ENCODE measurements at regions of chr2 and their contacts with region 1.

Region 1: GRCh38 chr2:168246483-168247340 is 683 bp downstream of the STK39 start:
- DNase-seq: peak; percentile 76
- H3K4me3 Mint-ChIP-seq: peak overlapping the region; percentile 95
- H3K27ac Mint-ChIP-seq: peak overlapping the region; percentile 95
- H3K4me1 Mint-ChIP-seq: peaks cover 38% of the 10 kb centered on the region
- H3K27me3 Mint-ChIP-seq: peaks cover 2% of the 10 kb centered on the region

Region 2: DNA sequence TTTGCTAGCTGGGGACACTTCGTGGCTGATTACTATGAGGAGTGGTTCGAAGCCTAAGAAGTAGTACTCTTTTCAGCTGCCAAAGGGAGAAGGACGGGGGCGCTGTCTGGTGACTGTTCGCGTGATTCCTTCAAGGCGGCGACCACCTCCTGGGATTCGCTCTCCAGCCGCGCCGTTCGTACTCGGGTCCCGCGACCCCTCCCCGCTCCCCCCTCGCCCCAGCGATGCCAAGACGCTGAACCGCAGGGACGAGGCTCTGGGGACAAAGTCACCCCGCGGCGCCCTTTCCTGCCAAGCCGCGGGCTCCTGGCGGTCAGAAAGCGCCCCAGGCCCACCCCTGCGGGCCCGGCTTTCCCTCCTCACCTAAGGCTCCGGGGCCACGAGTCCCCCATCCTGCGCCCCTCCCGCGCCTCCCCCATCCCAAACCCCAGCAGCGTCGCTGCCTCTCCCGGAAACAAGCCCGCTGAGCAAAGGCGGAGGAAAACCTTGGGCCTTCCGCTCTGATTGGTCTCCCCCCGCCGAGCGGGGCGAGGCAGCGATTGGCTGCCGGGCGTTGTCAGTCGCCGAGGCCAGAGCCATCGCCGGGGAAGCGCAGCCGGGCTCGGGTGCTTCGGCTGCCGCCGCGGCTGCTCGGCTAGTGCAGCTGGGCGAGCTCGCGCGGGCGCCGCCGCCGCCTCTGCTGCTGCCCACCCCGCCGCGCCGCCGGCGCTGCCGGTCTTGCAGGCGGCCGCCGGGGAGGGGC is 954.1 kb before region 1 on chr2:
- intact Hi-C with region 1: loop called (anchors 5 kb)
- DNase-seq: peak; percentile 65
- H3K4me3 Mint-ChIP-seq: peak within 1 kb of the TSS; percentile 70
- H3K27ac Mint-ChIP-seq: peak within 1 kb of the TSS; percentile 0
- H3K4me1 Mint-ChIP-seq: peaks cover 9% of the 10 kb centered on the region
- H3K27me3 Mint-ChIP-seq: peaks cover 35% of the 10 kb centered on the region

Region 3: GRCh38 chr2:168194784-168195522 is 51.8 kb before region 1 on chr2:
- intact Hi-C with region 1: loop called (anchors 1 kb)
- DNase-seq: peak; percentile 27
- H3K4me3 Mint-ChIP-seq: peak overlapping the region; percentile 64
- H3K27ac Mint-ChIP-seq: peak overlapping the region; percentile 91
- H3K4me1 Mint-ChIP-seq: peaks cover 56% of the 10 kb centered on the region
- H3K27me3 Mint-ChIP-seq: no peaks in the 10 kb centered on the region

Region 4: DNA sequence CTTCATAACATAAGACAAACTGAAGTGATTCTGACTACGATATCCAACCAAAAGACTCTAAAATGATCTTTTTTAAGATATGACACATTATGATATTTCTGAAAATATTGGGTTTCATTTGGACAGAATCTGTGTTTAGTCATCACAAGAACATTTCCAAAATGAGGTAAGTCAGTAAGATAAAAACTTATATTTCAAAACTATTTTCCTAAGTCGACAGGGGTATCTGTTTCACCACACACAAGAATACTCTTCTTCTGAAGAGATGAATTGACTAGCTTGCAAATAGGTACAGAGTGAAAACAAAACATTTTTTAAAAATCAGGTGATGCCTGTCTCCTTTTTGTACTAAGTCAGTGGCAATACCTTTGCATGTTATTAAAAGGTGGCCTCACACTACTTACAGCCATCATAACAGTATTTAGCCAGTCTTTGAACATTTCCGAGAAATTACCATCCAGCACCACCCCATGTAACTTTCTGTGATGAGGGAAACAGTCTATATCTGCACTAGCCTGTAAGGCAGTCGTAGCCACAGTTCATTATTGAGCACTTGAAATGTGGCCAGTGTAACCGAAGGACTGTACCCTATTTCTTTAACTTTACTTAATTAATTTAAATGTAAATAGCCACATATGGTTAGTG is 12.8 kb before region 1 on chr2:
- intact Hi-C with region 1: loop called (anchors 1 kb)
- DNase-seq: no peak
- H3K4me3 Mint-ChIP-seq: no peak overlapping the region
- H3K27ac Mint-ChIP-seq: peak overlapping the region; percentile 32
- H3K4me1 Mint-ChIP-seq: peaks cover 33% of the 10 kb centered on the region
- H3K27me3 Mint-ChIP-seq: no peaks in the 10 kb centered on the region

Region 5: GRCh38 chr2:168490015-168490874 is 243.5 kb after region 1 on chr2:
- intact Hi-C with region 1: loop called (anchors 1 kb)
- DNase-seq: peak; percentile 45
- H3K4me3 Mint-ChIP-seq: peak overlapping the region; percentile 78
- H3K27ac Mint-ChIP-seq: peak overlapping the region; percentile 92
- H3K4me1 Mint-ChIP-seq: peaks cover 42% of the 10 kb centered on the region
- H3K27me3 Mint-ChIP-seq: peaks cover 9% of the 10 kb centered on the region

Region 6: GRCh38 chr2:168890006-168890782 is 643.5 kb after region 1 on chr2 and contains the start of gene SPC25:
- intact Hi-C with region 1: loop called (anchors 1 kb)
- DNase-seq: peak; percentile 87
- H3K4me3 Mint-ChIP-seq: peak within 1 kb of the TSS; percentile 98
- H3K27ac Mint-ChIP-seq: peak within 1 kb of the TSS; percentile 92
- H3K4me1 Mint-ChIP-seq: peaks cover 32% of the 10 kb centered on the region
- H3K27me3 Mint-ChIP-seq: peaks cover 21% of the 10 kb centered on the region
- total RNA-seq, gene SPC25: 17.9 and 19.9 TPM in 2 replicates

Measured in activated T-helper 1 cell treated with anti-CD3 and anti-CD28 coated beads, Interleukin-12 subunit alpha, Interleukin-12 subunit beta, Interleukin-2, Interleukin-4 antibody, amounts not matched to agents 30 ng/mL and 10 ng/mL and 1 ng/mL, durations not matched to agents 14 hours and 24 hours and 36 hours (primary cell).